Aorta (tissue), 5 donors: ENCODE measurements at regions of chr11 and their contacts with region 1.

Region 1: GRCh38 chr11:95076416-95076815 is 9.7 kb downstream of the SRSF8 start:
- DNase-seq: peak in 1 of 2 donors; percentile 59
- ATAC-seq: peak; percentile 64
- H3K4me3 ChIP-seq: no peak overlapping the region
- H3K27ac ChIP-seq: no peak overlapping the region
- H3K4me1 ChIP-seq: peaks cover 8 to 20% of the 10 kb centered on the region in 2 donors
- H3K27me3 ChIP-seq: no peaks in the 10 kb centered on the region

Region 2: DNA sequence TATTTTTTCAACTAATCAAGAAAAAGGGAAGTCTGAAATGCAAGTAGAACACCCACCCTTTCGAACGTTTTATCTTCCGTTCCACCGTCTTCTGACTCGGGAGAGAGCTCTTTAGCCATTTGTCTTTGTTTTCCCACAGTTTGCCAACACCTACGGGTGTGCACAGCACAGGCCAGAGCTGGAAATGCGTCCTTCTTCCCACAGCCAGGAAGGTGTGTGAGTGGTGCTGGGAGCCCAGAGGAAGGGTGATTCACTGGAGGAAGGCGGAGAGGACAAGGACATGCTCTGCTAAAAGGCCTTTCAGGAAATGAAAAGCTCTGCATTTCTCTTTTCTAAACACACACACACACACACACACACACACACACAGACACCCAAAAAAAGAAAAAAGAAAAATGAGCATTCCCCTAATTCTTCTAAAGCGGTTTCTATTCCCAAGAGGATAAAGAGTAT is 31.8 kb after region 1 on chr11:
- intact Hi-C with region 1: loop called in 1 of 2 experiments (anchors 5 kb)
- DNase-seq: peak; percentile 71 to 79
- ATAC-seq: peak; percentile 74
- H3K4me3 ChIP-seq: no peak overlapping the region
- H3K27ac ChIP-seq: peak overlapping the region in 1 of 2 donors; percentile 42
- H3K4me1 ChIP-seq: peaks cover 1 to 8% of the 10 kb centered on the region in 2 donors
- H3K27me3 ChIP-seq: no peaks in the 10 kb centered on the region

Region 3: GRCh38 chr11:95222817-95223216 is 146.4 kb after region 1 on chr11:
- intact Hi-C with region 1: no loop called
- DNase-seq: no peak
- ATAC-seq: no peak
- H3K4me3 ChIP-seq: no peak overlapping the region
- H3K27ac ChIP-seq: no peak overlapping the region
- H3K4me1 ChIP-seq: no peaks in the 10 kb centered on the region
- H3K27me3 ChIP-seq: no peaks in the 10 kb centered on the region

Region 4: DNA sequence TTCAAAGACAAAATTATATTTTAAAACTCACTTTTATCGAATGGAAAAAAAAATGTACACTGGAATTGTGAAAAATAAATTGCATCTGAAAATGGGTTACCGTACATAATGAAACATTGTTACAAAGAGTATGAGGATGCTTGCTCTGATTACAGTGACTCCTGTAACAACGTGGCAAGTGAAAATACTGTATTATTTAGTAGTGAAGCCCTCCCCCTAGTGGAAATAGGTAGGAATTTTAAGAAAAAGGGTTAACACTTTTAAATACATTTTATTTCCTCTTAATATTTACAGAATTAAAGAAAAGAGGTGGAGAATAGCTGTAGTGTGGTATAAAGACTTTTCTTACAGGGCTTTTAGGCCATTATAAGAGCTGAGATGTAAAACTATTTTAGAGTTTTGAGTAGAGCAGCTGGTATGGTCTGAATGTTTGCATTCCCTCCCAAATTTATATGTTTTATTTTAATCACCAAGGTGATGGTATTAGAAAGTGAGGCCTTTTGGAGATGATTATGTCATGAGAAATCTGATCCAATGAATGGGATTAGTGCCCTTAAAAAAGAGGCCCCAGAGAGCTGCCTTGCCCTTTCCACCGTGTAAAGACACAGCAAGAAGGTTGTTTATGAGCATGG is 688.0 kb after region 1 on chr11:
- intact Hi-C with region 1: loop called in 1 of 2 experiments (anchors 10 kb)
- DNase-seq: no peak
- ATAC-seq: no peak
- H3K4me3 ChIP-seq: no peak overlapping the region
- H3K27ac ChIP-seq: no peak overlapping the region
- H3K4me1 ChIP-seq: no peaks in the 10 kb centered on the region
- H3K27me3 ChIP-seq: no peaks in the 10 kb centered on the region